Sigmoid colon (tissue), 7 donors: ENCODE measurements at regions of chr3 and their contacts with region 1.

Region 1: GRCh38 chr3:124492811-124493210 is 237.4 kb upstream of the UMPS start:
- DNase-seq: no peak
- H3K4me3 ChIP-seq: no peak overlapping the region
- H3K27ac ChIP-seq: no peak overlapping the region
- H3K4me1 ChIP-seq: no peaks in the 10 kb centered on the region
- H3K27me3 ChIP-seq: no peaks in the 10 kb centered on the region
- CTCF ChIP-seq: no peak
- EP300 ChIP-seq: no peak
- POLR2A ChIP-seq: no peak

Region 2: GRCh38 chr3:124333931-124334640 is 158.7 kb before region 1 on chr3:
- intact Hi-C with region 1: no loop called
- DNase-seq: no peak
- H3K4me3 ChIP-seq: no peak overlapping the region
- H3K27ac ChIP-seq: no peak overlapping the region
- H3K4me1 ChIP-seq: no peaks in the 10 kb centered on the region
- H3K27me3 ChIP-seq: no peaks in the 10 kb centered on the region
- CTCF ChIP-seq: no peak
- EP300 ChIP-seq: no peak
- POLR2A ChIP-seq: no peak

Region 3: DNA sequence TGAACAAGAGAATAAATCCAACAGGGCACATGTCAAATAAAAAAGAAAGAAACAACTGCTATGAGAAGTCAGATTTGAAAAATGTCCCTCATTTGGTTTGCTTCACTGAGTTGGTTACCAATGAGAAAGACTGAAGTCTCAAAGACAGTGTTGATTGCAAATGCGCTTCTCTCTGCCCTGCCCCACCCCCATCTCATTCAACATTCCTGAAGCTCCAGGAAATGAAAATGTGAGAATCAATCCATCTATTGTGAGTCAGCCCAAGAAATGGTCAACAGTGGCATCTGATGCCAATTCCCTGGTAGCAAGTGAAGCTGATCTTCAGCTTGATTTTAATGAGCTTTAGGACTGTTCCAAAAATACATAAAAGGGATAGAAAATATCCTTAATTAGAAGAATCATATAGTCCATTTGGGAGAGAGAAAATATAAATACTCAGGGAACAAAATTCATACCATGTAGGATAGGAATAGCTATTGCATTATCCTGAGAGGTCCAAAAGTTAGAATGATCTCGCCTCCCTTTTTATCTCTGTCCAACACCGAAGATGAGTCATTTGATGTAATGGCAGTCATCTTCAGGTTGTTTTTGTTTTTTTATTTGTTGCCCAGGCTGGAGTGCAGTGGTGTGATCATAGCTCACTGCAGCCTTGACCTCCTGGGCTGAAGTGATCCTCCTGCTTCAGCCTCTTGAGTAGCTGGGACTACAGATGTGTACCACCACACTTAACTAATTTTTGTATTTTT is 37.2 kb after region 1 on chr3:
- intact Hi-C with region 1: no loop called
- DNase-seq: no peak
- H3K4me3 ChIP-seq: no peak overlapping the region
- H3K27ac ChIP-seq: no peak overlapping the region
- H3K4me1 ChIP-seq: no peaks in the 10 kb centered on the region
- H3K27me3 ChIP-seq: no peaks in the 10 kb centered on the region
- CTCF ChIP-seq: no peak
- EP300 ChIP-seq: no peak
- POLR2A ChIP-seq: no peak

Region 4: DNA sequence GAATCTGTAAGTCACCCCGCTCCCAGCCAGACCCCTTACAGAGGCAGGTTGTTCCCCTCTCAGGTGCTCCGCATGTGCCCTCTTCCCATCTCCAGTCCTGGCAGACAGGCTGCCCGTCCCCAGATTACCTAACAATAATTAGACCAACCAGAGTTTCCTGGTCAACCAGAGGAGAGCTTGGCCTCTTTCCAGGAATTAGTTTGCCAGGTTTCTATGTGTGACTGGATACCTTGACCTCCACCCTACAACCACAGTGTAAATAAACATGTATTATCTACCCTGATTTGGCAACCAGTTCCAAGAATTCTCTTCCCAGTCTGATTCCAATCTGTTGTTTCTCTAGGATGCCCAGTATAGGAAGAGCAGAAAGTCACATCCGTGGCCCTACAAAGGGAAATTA is 59.4 kb after region 1 on chr3:
- intact Hi-C with region 1: loop called (anchors 2 kb)
- DNase-seq: no peak
- H3K4me3 ChIP-seq: no peak overlapping the region
- H3K27ac ChIP-seq: no peak overlapping the region
- H3K4me1 ChIP-seq: peaks cover 0 to 5% (median under 1%) of the 10 kb centered on the region in 4 donors
- H3K27me3 ChIP-seq: no peaks in the 10 kb centered on the region
- CTCF ChIP-seq: no peak
- EP300 ChIP-seq: no peak
- POLR2A ChIP-seq: no peak